ENCODE measurements at regions of chr13 and their contacts with region 1.

Region 1: GRCh38 chr13:109145631-109146030 is 516.2 kb downstream of the MYO16 start:
- DNase-seq: no peak

Region 2: DNA sequence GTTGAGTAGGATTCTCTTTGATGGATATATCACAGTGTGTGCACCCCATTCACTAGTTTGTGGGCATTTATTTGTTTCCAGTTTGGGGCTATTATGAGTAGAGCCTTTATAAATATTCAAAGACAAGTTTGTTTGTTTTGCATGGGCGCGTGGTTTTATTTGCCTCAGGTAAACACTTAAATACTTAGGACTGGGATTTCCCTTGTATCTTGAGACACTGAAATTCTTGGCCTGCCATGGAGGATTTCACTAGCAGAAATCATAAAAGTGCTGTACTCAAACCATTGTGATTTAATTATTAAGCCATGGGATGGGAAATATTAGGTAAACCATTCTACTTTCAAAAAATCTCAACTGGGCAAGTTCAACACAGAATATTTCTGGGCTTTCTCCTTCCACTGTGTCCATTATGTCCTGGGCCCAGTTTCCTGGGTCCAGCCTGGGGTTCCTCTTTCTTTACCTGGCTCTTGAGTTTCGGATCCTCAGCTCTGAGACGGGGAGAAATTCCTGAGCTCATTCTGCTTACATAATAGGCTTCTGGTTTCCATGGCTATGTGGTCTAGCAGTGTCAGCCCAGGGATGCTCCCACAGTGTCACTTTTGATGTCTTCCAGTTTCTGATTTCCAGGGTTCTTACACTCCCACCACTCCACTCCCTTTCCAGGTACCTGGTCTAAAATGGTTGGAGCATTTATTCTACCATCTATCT is 501.8 kb before region 1 on chr13:
- intact Hi-C with region 1: no loop called
- DNase-seq: no peak

Region 3: GRCh38 chr13:109256866-109257760 is 111.5 kb after region 1 on chr13:
- intact Hi-C with region 1: no loop called
- DNase-seq: no peak

Region 4: DNA sequence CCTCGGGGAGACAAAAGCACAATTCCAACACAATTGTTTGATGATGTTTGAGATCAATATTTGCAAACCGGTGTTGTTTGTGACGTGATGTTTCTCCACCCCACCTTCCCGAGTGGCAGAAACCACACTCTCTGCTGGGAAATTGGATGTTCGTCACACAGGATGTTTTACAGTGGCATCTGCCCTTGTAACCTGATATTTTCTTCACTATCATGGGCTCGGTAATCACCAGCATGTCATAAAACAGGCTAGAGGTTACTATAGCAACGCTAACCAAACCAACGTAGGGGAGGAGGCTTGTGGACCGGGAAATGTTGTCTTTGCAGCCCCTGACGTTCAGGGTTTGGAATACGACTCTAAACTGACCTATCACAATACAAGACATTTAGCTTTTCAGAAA is 186.3 kb after region 1 on chr13:
- intact Hi-C with region 1: loop called (anchors 5 kb)
- DNase-seq: no peak

Measured in cardiac septum (tissue), 1 donor.